ENCODE measurements at regions of chr6 and their contacts with region 1.

Region 1: DNA sequence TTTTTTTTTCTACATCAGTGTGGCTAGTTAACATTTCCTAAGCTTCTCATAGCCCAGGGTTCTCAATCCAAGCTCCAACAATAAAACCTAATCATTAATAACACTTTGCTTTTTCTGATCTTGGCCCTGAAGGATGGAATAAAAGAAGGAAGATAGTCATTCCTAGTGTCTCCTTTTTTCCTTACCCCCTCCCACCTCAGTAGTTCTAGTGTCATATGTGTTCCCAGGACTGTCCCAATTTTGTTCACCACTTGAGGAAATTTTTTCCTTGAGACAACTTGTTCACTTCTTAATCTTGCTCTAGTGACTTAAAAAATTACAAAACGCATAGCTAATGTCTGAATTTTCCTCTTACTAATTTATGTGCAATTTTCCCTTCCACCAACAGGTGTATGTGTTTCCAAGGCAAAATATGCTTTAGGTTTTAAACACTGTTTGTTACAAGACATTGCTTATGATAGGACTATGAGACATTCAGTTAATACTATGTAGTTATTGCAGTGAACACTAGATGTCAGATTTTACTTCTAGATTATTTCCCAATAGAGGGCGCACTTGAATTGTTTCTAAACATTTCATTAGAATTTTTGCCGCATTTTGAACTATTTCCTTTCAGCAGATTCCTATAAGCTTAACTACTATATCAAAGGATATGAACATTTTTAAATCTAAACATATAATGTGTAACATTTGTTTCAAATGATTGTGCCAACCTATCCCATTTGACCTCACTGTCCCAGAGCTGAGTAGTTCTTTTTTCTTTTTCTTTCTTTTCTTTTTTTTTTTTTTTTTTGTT is 18.5 kb upstream of the C6orf141 start:
- DNase-seq: peak; percentile 64 to 77
- ATAC-seq: peak; percentile 97 to 98
- H3K4me3 ChIP-seq: peak overlapping the region; percentile 32
- H3K27ac ChIP-seq: peak overlapping the region; percentile 63 to 85
- H3K4me1 ChIP-seq: peaks cover 25% of the 10 kb centered on the region
- CTCF ChIP-seq: peak; percentile 98
- EP300 ChIP-seq: no peak
- POLR2A ChIP-seq: no peak
- RAD21 ChIP-seq: peak; percentile 79 to 88

Region 2: DNA sequence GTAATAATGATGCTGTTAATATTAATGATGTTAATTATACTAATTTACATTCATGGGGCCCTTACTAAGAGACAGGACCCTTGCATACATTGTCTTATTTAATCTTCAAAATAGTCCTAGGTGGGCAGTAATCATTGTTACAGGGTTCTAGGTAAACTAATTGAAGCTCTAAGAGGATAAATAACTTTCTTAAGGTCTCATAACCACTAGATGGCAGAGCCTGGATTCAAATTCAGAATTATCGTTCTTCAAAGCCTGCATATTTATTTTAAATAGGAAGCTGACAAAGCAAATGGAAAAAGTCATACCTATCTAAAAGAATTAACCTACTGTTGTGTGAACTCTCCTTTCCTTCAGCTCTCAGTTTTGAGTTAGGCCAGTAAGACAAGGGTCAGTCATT is 1444.5 kb before region 1 on chr6:
- CTCF ChIA-PET with region 1: no interaction called
- POLR2A ChIA-PET with region 1: no interaction called
- DNase-seq: peak in 1 of 2 experiments; percentile 22
- ATAC-seq: no peak
- H3K4me3 ChIP-seq: no peak overlapping the region
- H3K27ac ChIP-seq: no peak overlapping the region
- H3K4me1 ChIP-seq: no peaks in the 10 kb centered on the region
- CTCF ChIP-seq: peak; percentile 52
- EP300 ChIP-seq: no peak
- POLR2A ChIP-seq: no peak
- RAD21 ChIP-seq: peak; percentile 49 to 60

Region 3: DNA sequence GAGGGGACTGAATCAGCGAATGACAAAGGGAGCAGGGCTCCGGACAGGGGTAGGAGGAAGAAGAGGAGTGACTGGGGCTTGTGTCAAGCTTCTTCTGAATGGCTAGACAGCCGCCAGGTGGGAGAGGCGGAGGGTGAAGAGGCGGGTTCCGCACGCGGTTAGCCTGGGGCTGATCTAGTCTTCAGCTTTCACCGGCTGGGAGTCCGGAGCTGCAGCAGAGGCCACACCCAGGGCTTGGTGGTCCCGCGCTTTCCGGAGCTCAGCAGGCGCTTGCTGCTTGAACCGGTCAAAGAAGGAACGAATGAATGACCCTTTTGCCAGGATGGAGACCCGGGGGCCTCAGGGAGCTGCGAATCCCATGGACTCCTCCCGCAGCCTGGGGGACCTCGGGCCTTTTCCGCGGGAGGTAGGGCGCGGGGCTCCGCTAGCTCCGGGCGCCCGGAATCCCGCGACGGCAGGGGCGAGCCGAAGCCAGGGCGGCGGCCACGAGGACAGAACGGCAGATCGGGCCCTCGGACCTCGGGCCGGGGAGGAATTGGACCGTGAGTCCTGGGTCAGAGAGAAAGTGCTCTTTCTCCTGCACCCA is 18.6 kb after region 1 on chr6 and contains the start of gene C6orf141:
- CTCF ChIA-PET with region 1: interaction called, 70 read pairs
- POLR2A ChIA-PET with region 1: interaction called, 3 read pairs
- DNase-seq: peak; percentile 60 to 65
- ATAC-seq: peak; percentile 91 to 92
- H3K4me3 ChIP-seq: peak within 1 kb of the TSS; percentile 65
- H3K27ac ChIP-seq: peak within 1 kb of the TSS; percentile 87 to 94
- H3K4me1 ChIP-seq: peaks cover 36% of the 10 kb centered on the region
- CTCF ChIP-seq: no peak
- EP300 ChIP-seq: no peak
- POLR2A ChIP-seq: peak; percentile 50
- RAD21 ChIP-seq: no peak
- polyA plus RNA-seq, gene C6orf141: 20.5 and 24.9 TPM in 2 replicates

Region 4: DNA sequence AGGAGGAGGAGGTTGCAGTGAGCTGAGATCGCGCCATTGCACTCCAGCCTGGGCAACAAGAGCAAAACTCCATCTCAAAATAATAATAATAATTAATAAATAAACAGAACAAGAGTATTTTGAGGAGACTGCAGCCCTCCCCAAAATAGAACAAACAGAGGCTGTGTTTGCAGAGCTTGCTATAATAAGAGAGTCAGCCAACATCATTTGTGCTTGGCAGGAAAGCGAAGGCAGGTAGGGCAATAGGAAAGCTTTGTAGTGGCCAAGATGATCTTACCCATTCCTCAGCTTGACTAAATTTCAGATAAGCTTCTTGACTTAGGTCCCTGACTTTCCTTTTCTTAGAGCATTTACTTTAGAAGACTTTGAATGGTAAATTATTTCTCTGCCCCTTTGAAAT is 25.2 kb after region 1 on chr6:
- CTCF ChIA-PET with region 1: interaction called, 70 read pairs
- POLR2A ChIA-PET with region 1: interaction called, 3 read pairs
- DNase-seq: no peak
- ATAC-seq: no peak
- H3K4me3 ChIP-seq: no peak overlapping the region; the same call in 2 of the 3 replicates
- H3K27ac ChIP-seq: peak overlapping the region; percentile 80 to 86
- H3K4me1 ChIP-seq: peaks cover 58% of the 10 kb centered on the region
- CTCF ChIP-seq: no peak
- EP300 ChIP-seq: no peak
- POLR2A ChIP-seq: no peak
- RAD21 ChIP-seq: no peak

Region 5: DNA sequence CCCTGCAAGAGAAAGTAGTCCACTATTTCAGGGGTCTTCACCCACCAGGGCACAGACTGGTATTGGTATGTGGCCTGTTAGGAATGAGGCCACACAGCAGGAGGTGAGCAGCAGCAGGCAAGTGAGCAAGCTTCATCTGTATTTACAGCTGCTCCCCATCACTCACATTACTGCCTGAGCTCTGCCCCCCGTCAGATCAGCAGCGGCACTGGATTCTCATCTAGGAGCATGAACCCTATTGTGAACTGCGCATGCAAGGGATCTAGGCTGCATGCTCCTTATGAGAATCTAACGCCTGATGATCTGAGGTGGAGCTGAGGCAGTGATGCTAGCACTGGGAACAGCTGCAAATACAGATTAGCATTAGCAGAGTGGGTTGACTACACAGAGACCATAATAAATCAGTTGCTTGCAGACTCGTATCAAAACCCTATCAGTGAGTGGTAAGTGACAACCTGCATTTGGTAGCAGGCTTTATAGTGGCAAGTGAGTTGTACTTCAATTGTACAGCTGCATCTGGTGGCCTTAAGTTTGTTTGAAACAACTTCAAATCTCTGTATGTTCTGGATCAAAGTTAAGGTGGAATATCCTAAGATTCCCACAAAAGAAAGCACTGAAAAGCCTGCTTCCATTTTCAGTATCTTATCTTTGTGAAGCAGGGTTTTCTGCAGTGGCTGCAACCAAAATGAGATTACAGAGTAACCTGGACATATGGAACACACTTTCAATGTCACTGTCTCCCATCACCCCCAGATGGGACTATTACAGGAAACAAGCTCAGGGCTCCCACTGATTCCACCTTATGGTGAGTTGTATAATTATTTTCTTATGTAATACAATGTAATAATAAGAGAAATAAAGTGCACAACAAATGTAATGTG is 31.3 kb after region 1 on chr6:
- CTCF ChIA-PET with region 1: interaction called, 17 read pairs
- POLR2A ChIA-PET with region 1: no interaction called
- DNase-seq: no peak
- ATAC-seq: peak in 1 of 2 experiments; percentile 25; a peak in 2 of 6 replicates
- H3K4me3 ChIP-seq: no peak overlapping the region
- H3K27ac ChIP-seq: peak overlapping the region; percentile 23 to 47; a peak in 2 of 6 replicates
- H3K4me1 ChIP-seq: peaks cover 25% of the 10 kb centered on the region
- CTCF ChIP-seq: no peak
- EP300 ChIP-seq: no peak
- POLR2A ChIP-seq: no peak
- RAD21 ChIP-seq: no peak

Region 6: DNA sequence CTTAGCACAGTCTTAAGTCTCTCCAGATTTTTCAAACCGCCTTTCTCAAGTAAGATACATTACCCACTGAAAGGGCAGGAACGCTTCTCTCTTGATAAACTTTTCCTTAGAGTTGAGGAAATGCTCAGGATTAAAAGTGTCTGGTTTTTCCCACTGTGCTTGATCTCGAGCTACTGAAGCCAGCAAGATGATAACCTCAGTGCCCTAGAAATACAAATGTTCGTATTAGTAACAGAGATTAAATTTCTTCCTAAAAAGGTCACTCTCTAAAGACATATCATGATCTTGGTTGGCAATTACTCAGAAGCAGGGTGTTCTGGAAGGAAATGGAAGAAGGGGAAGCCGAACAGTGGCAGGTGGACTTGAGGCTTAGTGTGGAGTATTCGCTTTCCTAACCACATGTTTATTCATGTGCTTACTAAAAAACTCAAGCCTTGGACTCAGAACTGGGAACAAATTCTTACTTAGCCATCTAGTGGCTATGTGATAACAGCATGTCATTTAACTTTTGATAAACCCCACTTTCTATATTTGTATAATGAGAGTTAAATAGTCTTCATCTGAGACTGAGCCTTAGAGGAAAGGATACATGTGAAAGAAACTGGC is 38.6 kb after region 1 on chr6:
- CTCF ChIA-PET with region 1: interaction called, 25 read pairs
- POLR2A ChIA-PET with region 1: no interaction called
- DNase-seq: peak in 1 of 2 experiments; percentile 48
- ATAC-seq: peak; percentile 76 to 77; a peak in 5 of 6 replicates
- H3K4me3 ChIP-seq: no peak overlapping the region
- H3K27ac ChIP-seq: peak overlapping the region; percentile 42 to 75; a peak in 5 of 6 replicates
- H3K4me1 ChIP-seq: peaks cover 22% of the 10 kb centered on the region
- CTCF ChIP-seq: peak; percentile 44
- EP300 ChIP-seq: no peak
- POLR2A ChIP-seq: no peak
- RAD21 ChIP-seq: peak; percentile 13 to 33; a peak in 3 of 5 replicates

Region 7: GRCh38 chr6:49606696-49607390 is 74.9 kb after region 1 on chr6:
- CTCF ChIA-PET with region 1: interaction called, 76 read pairs
- POLR2A ChIA-PET with region 1: interaction called, 3 read pairs
- DNase-seq: peak; percentile 41 to 86
- ATAC-seq: peak; percentile 84
- H3K4me3 ChIP-seq: peak overlapping the region; percentile 15; the same call in 1 of the 3 replicates
- H3K27ac ChIP-seq: peak overlapping the region; percentile 50 to 59; a peak in 5 of 6 replicates
- H3K4me1 ChIP-seq: peaks cover 25% of the 10 kb centered on the region
- CTCF ChIP-seq: peak; percentile 78
- EP300 ChIP-seq: no peak
- POLR2A ChIP-seq: no peak
- RAD21 ChIP-seq: peak; percentile 80 to 81

Region 8: DNA sequence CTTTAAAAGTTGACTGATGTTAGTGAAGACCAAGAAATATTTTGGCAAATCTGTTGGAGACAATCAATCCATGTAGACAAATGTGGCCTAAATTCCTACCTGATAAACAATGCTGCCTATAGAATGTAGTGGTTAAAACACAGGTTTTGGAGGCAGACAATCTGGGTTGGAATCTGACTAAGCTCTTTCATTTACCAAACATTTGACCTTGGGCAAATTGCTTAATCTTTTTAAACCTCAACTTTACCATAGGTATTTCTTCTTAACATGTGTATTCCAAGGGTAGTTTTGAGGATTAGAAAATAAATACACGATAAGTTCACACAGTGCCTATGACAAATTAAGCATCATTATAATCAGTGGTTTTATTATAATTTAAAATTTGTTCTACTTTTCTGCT is 93.2 kb after region 1 on chr6:
- CTCF ChIA-PET with region 1: interaction called, 12 read pairs
- POLR2A ChIA-PET with region 1: no interaction called
- DNase-seq: no peak
- ATAC-seq: no peak
- H3K4me3 ChIP-seq: no peak overlapping the region
- H3K27ac ChIP-seq: no peak overlapping the region
- H3K4me1 ChIP-seq: no peaks in the 10 kb centered on the region
- CTCF ChIP-seq: no peak
- EP300 ChIP-seq: no peak
- POLR2A ChIP-seq: no peak
- RAD21 ChIP-seq: no peak